Activated CD4-positive, alpha-beta memory T cell treated with anti-CD3 and anti-CD28 coated beads for 36 hours (primary cell): ENCODE measurements at regions of chr9 and their contacts with region 1.

Region 1: GRCh38 chr9:81146656-81147337 is 542.5 kb downstream of the TLE1 start:
- DNase-seq: no peak
- H3K4me3 Mint-ChIP-seq: no peak overlapping the region
- H3K27ac Mint-ChIP-seq: no peak overlapping the region
- H3K4me1 Mint-ChIP-seq: no peaks in the 10 kb centered on the region
- H3K27me3 Mint-ChIP-seq: no peaks in the 10 kb centered on the region

Region 2: DNA sequence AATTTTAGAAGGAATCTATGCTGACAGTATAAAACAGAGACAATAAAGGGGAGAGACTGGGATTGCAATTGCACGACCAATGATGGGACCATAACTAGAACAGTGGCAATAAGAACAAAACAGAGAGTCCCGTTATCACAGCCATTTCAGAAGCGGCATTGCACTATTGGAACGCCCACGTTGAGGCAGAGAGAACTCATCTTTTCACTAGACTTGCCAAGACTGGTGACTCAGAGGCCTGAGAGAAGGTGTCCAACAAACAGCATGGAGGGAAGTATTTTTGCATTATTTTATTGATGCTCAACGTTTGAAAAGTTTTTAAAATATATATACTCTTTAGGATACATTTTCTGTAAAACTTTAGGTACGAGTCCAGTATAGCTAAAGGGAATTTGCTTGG is 195.1 kb before region 1 on chr9:
- CTCF ChIA-PET with region 1: no interaction called
- POLR2A ChIA-PET with region 1: no interaction called
- intact Hi-C with region 1: no loop called
- DNase-seq: no peak
- H3K4me3 Mint-ChIP-seq: no peak overlapping the region
- H3K27ac Mint-ChIP-seq: no peak overlapping the region
- H3K4me1 Mint-ChIP-seq: no peaks in the 10 kb centered on the region
- H3K27me3 Mint-ChIP-seq: no peaks in the 10 kb centered on the region

Region 3: GRCh38 chr9:81083067-81083466 is 63.7 kb before region 1 on chr9:
- CTCF ChIA-PET with region 1: no interaction called
- POLR2A ChIA-PET with region 1: no interaction called
- intact Hi-C with region 1: loop called (anchors 10 kb)
- DNase-seq: no peak
- H3K4me3 Mint-ChIP-seq: no peak overlapping the region
- H3K27ac Mint-ChIP-seq: no peak overlapping the region
- H3K4me1 Mint-ChIP-seq: no peaks in the 10 kb centered on the region
- H3K27me3 Mint-ChIP-seq: no peaks in the 10 kb centered on the region

Region 4: DNA sequence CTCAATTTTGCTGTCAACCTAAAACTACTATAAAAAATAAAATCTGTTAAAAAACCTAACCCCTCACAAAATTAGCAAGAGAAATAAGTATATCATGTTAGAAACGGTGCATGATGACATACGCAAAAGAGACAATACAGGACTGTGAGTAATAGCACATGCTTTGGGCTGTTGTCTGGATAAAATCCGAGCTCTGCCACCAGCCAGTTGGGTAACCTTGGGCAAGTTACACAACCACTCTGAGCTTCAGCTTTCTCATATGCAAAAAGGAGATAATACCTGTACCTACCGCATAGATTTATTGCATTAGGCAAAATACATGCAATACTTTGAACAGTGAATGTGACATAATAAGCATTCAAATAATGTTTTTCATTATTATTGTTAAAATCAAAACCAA is 60.9 kb after region 1 on chr9:
- CTCF ChIA-PET with region 1: no interaction called
- POLR2A ChIA-PET with region 1: no interaction called
- intact Hi-C with region 1: no loop called
- DNase-seq: no peak
- H3K4me3 Mint-ChIP-seq: no peak overlapping the region
- H3K27ac Mint-ChIP-seq: no peak overlapping the region
- H3K4me1 Mint-ChIP-seq: no peaks in the 10 kb centered on the region
- H3K27me3 Mint-ChIP-seq: no peaks in the 10 kb centered on the region